ENCODE measurements at regions of chr10 and their contacts with region 1.

Region 1: GRCh38 chr10:123559066-123559822 is 106.9 kb upstream of the GPR26 start:
- DNase-seq: peak; percentile 65 to 83 (median 81)
- ATAC-seq: peak; percentile 92
- H3K4me3 ChIP-seq: no peak overlapping the region
- H3K4me1 ChIP-seq: no peaks in the 10 kb centered on the region
- CTCF ChIP-seq: peak; percentile 96

Region 2: GRCh38 chr10:123043409-123043925 is 515.8 kb before region 1 on chr10:
- intact Hi-C with region 1: loop called in 1 of 2 experiments (anchors 10 kb)
- DNase-seq: peak in 2 of 3 donors; percentile 43 to 59
- ATAC-seq: peak; percentile 91
- H3K4me3 ChIP-seq: no peak overlapping the region
- H3K4me1 ChIP-seq: no peaks in the 10 kb centered on the region
- CTCF ChIP-seq: peak; percentile 43

Region 3: DNA sequence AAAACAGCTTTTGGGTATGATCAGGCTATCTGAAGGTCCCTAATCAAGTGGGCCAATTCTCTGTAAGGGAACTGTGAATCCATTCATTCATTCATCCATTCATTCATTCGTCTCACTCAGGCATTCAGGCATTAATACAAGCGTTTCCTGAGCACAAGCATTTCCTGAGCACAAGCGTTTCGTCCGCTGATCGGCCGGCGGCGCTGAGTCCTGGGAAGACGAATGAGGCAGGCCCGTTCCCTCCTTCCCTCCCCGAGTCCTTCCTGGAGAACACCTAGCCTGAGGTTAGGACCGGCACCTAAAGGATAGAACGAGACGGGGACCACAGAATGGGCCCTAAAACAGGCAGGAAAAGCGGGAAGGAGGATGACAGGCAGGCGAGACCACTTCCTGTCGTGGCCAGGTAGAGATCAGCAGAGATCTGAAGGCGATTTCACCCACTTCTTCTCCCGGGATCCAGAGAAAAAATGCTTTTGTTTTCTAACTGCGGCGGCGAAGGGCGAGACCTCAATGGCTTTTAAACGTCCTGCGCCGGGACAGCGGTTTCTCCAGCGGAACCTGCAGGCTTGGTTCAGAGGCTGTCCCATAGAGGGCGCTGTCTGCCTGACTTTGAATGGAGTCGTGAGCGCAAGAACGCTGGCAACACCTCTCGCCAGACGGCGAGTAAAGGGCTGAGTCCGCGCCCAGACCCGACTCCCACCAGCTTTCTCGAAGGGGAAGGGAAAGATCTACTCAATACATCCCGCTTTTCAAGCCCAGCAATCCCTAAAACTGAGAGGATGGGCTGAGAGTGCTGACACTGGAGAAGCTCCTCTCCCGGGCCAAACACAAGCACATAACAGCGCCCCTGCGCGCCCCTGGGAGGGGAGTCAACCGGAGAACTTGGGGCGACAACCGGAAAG is 426.4 kb before region 1 on chr10:
- intact Hi-C with region 1: loop called in 1 of 2 experiments (anchors 5 kb)
- DNase-seq: peak; percentile 79 to 93 (median 88)
- ATAC-seq: peak; percentile 87
- H3K4me3 ChIP-seq: no peak overlapping the region
- H3K4me1 ChIP-seq: peaks cover 39% of the 10 kb centered on the region
- CTCF ChIP-seq: peak; percentile 94

Region 4: DNA sequence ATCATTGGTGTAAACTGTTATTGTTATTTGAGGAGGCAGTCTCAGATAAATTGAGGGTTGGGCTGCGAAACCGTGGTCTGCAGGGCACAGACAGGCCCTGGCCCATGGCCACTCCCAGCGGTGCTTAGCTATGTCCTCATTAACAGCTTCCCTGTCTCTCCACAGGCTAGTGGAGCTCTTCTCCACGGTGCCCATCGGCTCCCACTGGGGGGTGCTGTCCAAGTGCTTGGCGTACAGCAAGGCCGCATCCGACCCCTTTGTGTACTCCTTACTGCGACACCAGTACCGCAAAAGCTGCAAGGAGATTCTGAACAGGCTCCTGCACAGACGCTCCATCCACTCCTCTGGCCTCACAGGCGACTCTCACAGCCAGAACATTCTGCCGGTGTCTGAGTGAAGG is 128.5 kb after region 1 on chr10:
- intact Hi-C with region 1: no loop called
- DNase-seq: no peak
- ATAC-seq: no peak
- H3K4me3 ChIP-seq: no peak overlapping the region
- H3K4me1 ChIP-seq: no peaks in the 10 kb centered on the region
- CTCF ChIP-seq: no peak